Mammary epithelial cell (primary cell): ENCODE measurements at regions of chr1 and their contacts with region 1.

Region 1: GRCh38 chr1:91500756-91501522 is at the start of gene CDC7:
- DNase-seq: peak; percentile 82
- H3K4me3 ChIP-seq: peak within 1 kb of the TSS; percentile 59 to 76 (median 67)
- H3K27ac ChIP-seq: peak within 1 kb of the TSS; percentile 85
- H3K4me1 ChIP-seq: peaks cover 3% of the 10 kb centered on the region
- H3K27me3 ChIP-seq: no peaks in the 10 kb centered on the region
- CTCF ChIP-seq: peak in 1 of 2 donors; percentile 47
- total RNA-seq, gene CDC7: 2.8 to 7.6 TPM

Region 2: DNA sequence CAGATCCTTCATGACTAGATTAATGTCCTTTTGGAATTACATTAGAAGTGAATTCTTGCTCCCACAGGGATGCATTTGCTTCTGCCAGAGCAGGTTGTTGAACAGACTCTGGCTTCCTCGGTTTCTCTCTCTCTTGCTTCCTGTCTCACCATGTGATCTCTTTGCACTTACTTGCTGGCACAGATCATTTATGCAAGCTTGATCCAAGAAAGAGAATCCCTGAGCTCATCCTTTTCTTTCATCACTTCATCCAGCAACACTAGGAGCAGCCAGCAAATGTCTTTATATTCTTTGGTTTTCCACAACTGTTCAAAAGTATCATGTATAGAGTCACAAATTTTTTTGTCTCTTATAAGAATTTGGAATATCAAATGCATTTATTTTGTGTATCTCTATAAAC is 1192.5 kb before region 1 on chr1:
- CTCF ChIA-PET with region 1: no interaction called
- dilution Hi-C with region 1: no loop called
- in situ Hi-C with region 1: no loop called
- intact Hi-C with region 1: no loop called
- DNase-seq: no peak
- H3K4me3 ChIP-seq: no peak overlapping the region
- H3K27ac ChIP-seq: no peak overlapping the region
- H3K4me1 ChIP-seq: no peaks in the 10 kb centered on the region
- H3K27me3 ChIP-seq: no peaks in the 10 kb centered on the region
- CTCF ChIP-seq: no peak

Region 3: GRCh38 chr1:91440845-91441244 is 60.1 kb before region 1 on chr1:
- CTCF ChIA-PET with region 1: no interaction called
- dilution Hi-C with region 1: no loop called
- in situ Hi-C with region 1: no loop called
- intact Hi-C with region 1: loop called (anchors 2 kb)
- DNase-seq: no peak
- H3K4me3 ChIP-seq: no peak overlapping the region
- H3K27ac ChIP-seq: no peak overlapping the region
- H3K4me1 ChIP-seq: no peaks in the 10 kb centered on the region
- H3K27me3 ChIP-seq: peaks cover 2% of the 10 kb centered on the region
- CTCF ChIP-seq: peak; percentile 27 to 35